Tibial artery (tissue), 4 donors: ENCODE measurements at regions of chr13 and their contacts with region 1.

Region 1: GRCh38 chr13:30898678-30899241 is 7.3 kb upstream of the MEDAG start:
- DNase-seq: peak; percentile 73 to 94
- H3K4me3 ChIP-seq: peak overlapping the region in 1 of 2 donors; percentile 23
- H3K27ac ChIP-seq: peak overlapping the region; percentile 85
- H3K4me1 ChIP-seq: peaks cover 0 to 63% (median 49%) of the 10 kb centered on the region in 4 donors
- H3K27me3 ChIP-seq: no peaks in the 10 kb centered on the region
- CTCF ChIP-seq: peak in 1 of 2 experiments; percentile 10

Region 2: GRCh38 chr13:30739761-30740642 is 158.8 kb before region 1 on chr13:
- intact Hi-C with region 1: no loop called
- DNase-seq: no peak
- H3K4me3 ChIP-seq: no peak overlapping the region
- H3K27ac ChIP-seq: peak overlapping the region in 1 of 2 donors; percentile 8
- H3K4me1 ChIP-seq: peaks cover 3 to 23% (median 20%) of the 10 kb centered on the region in 4 donors
- H3K27me3 ChIP-seq: no peaks in the 10 kb centered on the region
- CTCF ChIP-seq: no peak

Region 3: GRCh38 chr13:30832845-30833332 is 65.9 kb before region 1 on chr13:
- intact Hi-C with region 1: no loop called
- DNase-seq: no peak
- H3K4me3 ChIP-seq: no peak overlapping the region
- H3K27ac ChIP-seq: no peak overlapping the region
- H3K4me1 ChIP-seq: peaks cover 0 to 8% (median 3%) of the 10 kb centered on the region in 4 donors
- H3K27me3 ChIP-seq: peaks cover 0 to 13% of the 10 kb centered on the region in 2 donors
- CTCF ChIP-seq: no peak

Region 4: DNA sequence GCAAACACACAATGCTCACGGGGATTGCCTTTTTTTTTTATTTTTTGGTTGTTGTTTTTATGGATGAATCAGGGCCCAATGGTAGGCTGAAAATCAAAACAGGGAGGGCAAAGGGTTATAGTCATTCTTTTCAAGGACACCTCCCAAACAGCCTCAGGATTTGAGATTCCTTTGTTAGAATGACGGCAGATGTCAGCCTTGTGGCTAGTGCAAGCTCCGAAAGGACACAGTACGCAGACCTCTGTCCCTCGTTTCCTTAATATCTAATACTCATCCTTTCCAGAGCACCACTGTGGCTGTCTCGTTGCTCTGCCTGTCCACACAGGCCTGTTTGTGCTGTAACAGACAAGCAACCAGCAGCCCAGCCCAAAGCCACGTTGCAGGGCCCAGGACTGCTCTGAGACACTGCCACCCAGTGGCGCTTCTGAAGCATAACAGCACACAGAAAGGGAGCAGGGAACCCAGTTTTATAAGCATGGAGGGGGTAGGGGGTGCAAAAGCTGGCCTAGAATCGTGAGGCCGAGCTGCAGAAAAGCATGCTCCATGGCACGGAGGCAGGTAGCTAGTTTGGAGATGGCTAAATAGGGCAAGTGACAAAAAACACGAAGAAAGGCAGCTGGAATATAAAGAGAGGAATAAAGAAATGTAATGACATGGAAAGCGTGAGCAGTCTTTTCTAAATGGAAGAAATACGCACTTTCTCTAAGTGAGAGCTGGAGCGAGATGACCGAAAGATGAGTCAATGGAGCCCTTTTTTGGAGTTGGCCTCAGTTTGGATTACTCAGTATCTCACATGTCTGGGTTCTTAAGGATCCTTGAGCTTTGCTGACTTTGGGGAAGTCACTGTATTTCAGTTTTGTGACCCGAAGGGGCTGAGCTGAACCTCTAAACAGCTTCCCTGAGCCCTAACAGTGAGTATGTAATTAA is 33.4 kb before region 1 on chr13:
- intact Hi-C with region 1: loop called (anchors 5 kb)
- DNase-seq: peak; percentile 85 to 90
- H3K4me3 ChIP-seq: no peak overlapping the region
- H3K27ac ChIP-seq: peak overlapping the region; percentile 87 to 93
- H3K4me1 ChIP-seq: peaks cover 6 to 63% (median 57%) of the 10 kb centered on the region in 4 donors
- H3K27me3 ChIP-seq: no peaks in the 10 kb centered on the region
- CTCF ChIP-seq: peak; percentile 92 to 94

Region 5: GRCh38 chr13:30880856-30881155 is 18.0 kb before region 1 on chr13:
- intact Hi-C with region 1: loop called (anchors 2 kb)
- DNase-seq: peak; percentile 70 to 85
- H3K4me3 ChIP-seq: no peak overlapping the region
- H3K27ac ChIP-seq: peak overlapping the region; percentile 92 to 93
- H3K4me1 ChIP-seq: peaks cover 0 to 66% (median 37%) of the 10 kb centered on the region in 4 donors
- H3K27me3 ChIP-seq: no peaks in the 10 kb centered on the region
- CTCF ChIP-seq: no peak